Transverse colon (tissue), 4 donors: ENCODE measurements at regions of chr17 and their contacts with region 1.

Region 1: DNA sequence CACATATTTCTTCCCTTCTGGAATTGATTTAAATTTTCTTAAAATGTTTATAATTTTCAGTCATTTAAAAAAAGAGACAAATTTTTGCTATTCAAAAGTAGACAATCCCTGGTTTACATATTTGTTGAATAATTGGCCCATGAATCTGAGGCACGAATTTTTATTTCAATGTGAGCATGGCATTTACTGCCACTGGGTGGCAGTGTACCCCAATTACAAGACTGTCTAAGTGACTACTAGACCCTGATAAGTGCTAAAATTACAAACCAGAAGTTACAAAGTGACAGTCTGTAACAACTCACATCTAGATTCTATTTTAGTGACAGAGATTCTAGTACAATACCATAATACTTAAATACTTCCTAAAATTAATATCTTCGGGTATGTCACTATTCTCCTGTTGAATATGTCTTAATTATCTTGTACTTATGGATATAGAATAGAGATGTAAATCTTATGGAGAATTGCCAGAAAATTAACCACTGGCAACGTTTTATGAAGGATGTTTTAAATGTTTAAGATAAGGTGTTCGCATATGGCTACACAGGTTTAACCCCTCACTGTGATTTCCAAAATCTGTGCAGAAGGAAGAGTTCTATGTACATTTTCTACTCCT is 235.8 kb downstream of the MAP2K4 start:
- DNase-seq: peak; percentile 18
- H3K4me3 ChIP-seq: no peak overlapping the region
- H3K27ac ChIP-seq: peak overlapping the region in 2 of 4 donors; percentile 13 to 29
- H3K4me1 ChIP-seq: no peaks in the 10 kb centered on the region
- H3K27me3 ChIP-seq: no peaks in the 10 kb centered on the region
- CTCF ChIP-seq: peak; percentile 62 to 76 (median 67)
- EP300 ChIP-seq: no peak
- POLR2A ChIP-seq: no peak

Region 2: GRCh38 chr17:12358477-12358876 is 102.0 kb after region 1 on chr17:
- in situ Hi-C with region 1: no loop called
- intact Hi-C with region 1: no loop called
- DNase-seq: peak; percentile 14
- H3K4me3 ChIP-seq: no peak overlapping the region
- H3K27ac ChIP-seq: peak overlapping the region; percentile 61 to 81 (median 68)
- H3K4me1 ChIP-seq: peaks cover 0 to 22% (median 8%) of the 10 kb centered on the region in 4 donors
- H3K27me3 ChIP-seq: no peaks in the 10 kb centered on the region
- CTCF ChIP-seq: no peak
- EP300 ChIP-seq: no peak
- POLR2A ChIP-seq: no peak

Region 3: DNA sequence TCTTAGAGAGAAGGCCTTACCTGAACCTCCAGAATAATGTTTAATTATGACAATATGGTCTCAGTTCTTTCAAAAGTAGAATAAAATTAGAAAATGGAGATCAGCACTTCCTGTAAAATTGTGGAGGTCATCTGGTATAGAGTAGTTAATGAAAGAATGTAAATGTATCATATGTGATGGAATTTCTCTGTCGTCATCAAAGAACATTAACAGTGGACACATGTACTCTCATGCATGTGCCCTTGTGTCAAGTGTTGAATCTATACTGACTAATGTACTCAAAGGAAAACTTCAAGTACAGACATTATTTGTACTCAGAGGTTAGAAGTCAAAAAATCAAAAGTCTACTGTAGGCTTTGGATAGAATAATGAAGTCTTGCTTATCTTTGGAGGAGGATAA is 280.0 kb after region 1 on chr17:
- in situ Hi-C with region 1: loop called in 1 of 4 experiments (anchors 10 kb)
- intact Hi-C with region 1: no loop called
- DNase-seq: no peak
- H3K4me3 ChIP-seq: no peak overlapping the region
- H3K27ac ChIP-seq: peak overlapping the region in 1 of 4 donors; percentile 48
- H3K4me1 ChIP-seq: no peaks in the 10 kb centered on the region
- H3K27me3 ChIP-seq: no peaks in the 10 kb centered on the region
- CTCF ChIP-seq: no peak
- EP300 ChIP-seq: no peak
- POLR2A ChIP-seq: no peak

Region 4: DNA sequence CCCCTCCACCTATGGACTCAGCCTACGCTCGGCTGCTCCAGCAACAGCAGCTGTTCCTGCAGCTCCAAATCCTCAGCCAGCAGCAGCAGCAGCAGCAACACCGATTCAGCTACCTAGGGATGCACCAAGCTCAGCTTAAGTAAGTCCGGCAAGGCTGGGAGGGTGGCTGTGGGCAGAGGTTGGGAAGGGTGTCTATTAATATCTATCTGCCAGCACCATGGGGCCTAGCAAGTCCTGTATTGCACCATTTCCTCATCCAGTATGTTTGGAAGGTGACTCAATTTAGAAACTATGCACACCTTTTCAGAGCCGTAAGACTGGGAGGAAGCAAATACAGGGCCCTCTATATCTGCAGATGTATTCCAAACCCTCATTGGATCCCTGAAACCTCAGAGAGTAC is 487.8 kb after region 1 on chr17:
- in situ Hi-C with region 1: no loop called
- intact Hi-C with region 1: loop called (anchors 5 kb)
- DNase-seq: no peak
- H3K4me3 ChIP-seq: no peak overlapping the region
- H3K27ac ChIP-seq: no peak overlapping the region
- H3K4me1 ChIP-seq: peaks cover 4 to 20% (median 7%) of the 10 kb centered on the region in 4 donors
- H3K27me3 ChIP-seq: no peaks in the 10 kb centered on the region
- CTCF ChIP-seq: no peak
- EP300 ChIP-seq: no peak
- POLR2A ChIP-seq: no peak

Region 5: GRCh38 chr17:12909046-12909445 is 652.6 kb after region 1 on chr17:
- in situ Hi-C with region 1: no loop called
- intact Hi-C with region 1: no loop called
- DNase-seq: no peak
- H3K4me3 ChIP-seq: no peak overlapping the region
- H3K27ac ChIP-seq: no peak overlapping the region
- H3K4me1 ChIP-seq: no peaks in the 10 kb centered on the region
- H3K27me3 ChIP-seq: no peaks in the 10 kb centered on the region
- CTCF ChIP-seq: no peak
- EP300 ChIP-seq: no peak
- POLR2A ChIP-seq: no peak